HEK293T (cell line): ENCODE measurements at regions of chr22 and their contacts with region 1.

Region 1: GRCh38 chr22:22959147-22959827 is 71.7 kb downstream of the IGLL5 start:
- DNase-seq: peak; percentile 77

Region 2: DNA sequence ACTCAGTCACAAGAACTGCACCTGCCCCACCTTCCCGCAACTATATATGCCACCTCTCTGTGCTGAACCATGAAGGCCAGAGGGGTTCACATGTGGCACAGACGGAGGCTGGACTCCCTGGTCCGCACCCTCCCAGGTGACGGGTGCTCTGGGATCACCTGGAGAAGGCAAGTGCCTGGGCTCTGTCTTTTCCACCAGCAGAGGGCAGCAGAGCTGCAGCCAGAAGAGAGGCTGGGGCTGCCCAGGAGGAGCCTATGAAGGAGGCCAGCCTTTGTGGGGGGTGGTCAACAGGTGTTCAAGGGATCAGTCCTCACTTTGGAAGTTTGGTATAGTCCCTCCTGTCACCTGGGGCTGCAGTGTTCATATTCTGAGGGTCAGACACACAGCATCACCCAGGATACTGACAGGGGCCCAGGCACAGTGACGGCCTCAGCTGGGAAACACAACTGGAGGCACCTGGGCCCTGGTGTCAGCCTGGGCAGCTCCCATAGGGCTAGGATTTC is 110.9 kb before region 1 on chr22:
- CTCF ChIA-PET with region 1: interaction called, 10 read pairs
- POLR2A ChIA-PET with region 1: no interaction called
- DNase-seq: peak; percentile 78

Region 3: GRCh38 chr22:22893077-22893805 is 66.0 kb before region 1 on chr22:
- CTCF ChIA-PET with region 1: no interaction called
- POLR2A ChIA-PET with region 1: no interaction called
- DNase-seq: no peak

Region 4: GRCh38 chr22:23033116-23033912 is 74.0 kb after region 1 on chr22:
- CTCF ChIA-PET with region 1: no interaction called
- POLR2A ChIA-PET with region 1: no interaction called
- DNase-seq: no peak

Region 5: DNA sequence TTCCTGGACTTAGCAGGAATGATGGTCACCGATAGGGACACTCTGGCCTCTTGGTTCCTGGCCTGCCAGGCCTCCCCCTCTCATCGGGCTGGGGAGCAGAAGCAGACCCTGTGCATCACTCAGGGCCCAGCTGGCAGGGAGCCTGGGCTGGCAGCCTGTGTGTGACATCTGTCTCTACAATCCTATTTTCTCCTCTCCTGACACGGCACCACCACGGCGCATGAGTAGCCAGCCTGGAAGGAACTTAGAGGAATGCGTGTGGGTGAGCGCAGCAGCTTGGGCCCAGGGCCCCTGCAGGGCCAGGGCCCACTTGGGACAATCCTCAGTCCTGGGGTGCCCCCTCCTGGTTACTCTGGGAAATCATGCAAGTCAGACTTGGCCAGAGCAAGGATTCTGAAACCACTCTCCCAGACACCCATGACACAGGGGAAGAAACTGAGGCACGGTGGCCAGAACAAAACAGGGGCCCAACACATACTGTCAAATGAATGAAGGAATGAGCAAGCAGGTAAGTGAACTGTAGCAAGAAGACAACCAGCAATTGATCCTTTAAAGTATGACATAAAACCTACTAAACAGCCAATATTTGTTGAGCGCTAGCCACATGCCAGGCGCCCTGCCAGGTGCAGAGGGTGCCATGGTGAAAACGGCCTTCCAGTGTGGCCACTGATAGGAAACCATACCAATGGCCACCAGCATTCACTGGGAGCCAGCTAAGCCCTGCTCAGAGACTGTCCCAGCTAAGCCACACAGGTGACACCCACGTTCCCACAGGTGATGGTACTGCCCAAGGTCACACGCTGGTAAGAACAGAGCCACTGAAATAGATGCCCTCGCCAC is 169.2 kb after region 1 on chr22:
- CTCF ChIA-PET with region 1: interaction called, 38 read pairs
- POLR2A ChIA-PET with region 1: interaction called, 3 read pairs
- DNase-seq: peak; percentile 91

Region 6: DNA sequence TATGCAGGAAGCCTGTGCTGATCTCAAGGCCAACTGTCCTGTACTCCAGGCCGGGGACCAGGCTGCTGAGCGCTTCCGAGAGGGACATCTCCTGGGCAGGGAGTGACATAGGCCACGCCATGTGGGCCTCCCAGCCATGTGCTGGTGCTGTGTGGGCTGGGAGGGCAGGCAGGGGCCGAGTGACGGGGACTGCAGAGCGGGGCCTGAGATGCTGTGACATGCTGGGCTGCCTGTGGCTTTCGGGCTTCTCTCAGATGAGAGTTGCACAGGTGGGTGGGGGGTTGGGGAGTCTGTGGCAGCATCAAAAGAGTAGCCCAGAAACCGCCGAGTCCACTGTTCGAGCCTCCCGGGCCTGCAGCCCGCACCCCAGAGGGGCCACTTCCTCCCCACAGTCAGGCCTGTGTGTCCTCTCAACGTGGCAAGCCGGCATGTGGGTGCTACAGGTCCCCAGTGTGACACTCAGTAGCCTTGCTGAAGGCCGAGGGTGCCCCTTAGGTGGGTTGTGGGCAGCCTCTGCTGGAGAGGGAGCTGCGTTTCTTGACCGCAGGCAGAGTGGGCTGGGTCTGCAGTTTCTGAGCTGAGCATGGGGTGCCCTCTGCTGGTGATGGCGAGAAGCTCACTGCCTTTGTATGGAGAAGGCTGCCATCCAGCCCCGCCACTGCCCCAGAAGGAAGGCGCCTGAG is 322.3 kb after region 1 on chr22:
- CTCF ChIA-PET with region 1: interaction called, 11 read pairs
- POLR2A ChIA-PET with region 1: no interaction called
- DNase-seq: peak; percentile 92